Psoas muscle (tissue), 8 donors: ENCODE measurements at regions of chr7 and their contacts with region 1.

Region 1: DNA sequence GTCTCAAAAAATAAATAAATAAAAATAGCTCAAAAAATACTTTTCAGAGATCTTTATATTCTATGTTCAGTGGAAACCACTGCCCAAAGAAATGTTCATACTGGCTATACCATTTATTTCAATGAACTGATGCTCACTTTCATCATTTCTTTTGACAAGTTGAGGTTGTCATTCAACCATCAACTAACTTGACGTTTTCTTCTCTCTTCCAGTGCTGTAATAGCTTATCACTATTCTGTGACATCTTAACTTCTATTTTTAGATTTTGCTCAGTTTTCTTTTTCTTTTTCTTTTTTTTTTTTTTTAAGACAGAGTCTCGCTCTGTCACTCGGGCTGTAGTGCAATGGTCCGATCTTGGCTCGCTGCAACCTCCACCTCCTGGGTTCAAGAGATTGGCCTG is 8.7 kb upstream of the CTAGE4 start:
- DNase-seq: no peak
- ATAC-seq: no peak
- H3K4me3 ChIP-seq: no peak overlapping the region
- H3K27ac ChIP-seq: no peak overlapping the region
- H3K4me1 ChIP-seq: no peaks in the 10 kb centered on the region
- H3K27me3 ChIP-seq: no peaks in the 10 kb centered on the region
- CTCF ChIP-seq: no peak

Region 2: GRCh38 chr7:144391823-144392255 is 217.2 kb after region 1 on chr7:
- intact Hi-C with region 1: loop called in 1 of 2 experiments (anchors 5 kb)
- DNase-seq: no peak
- ATAC-seq: peak; percentile 44 to 78 (median 52)
- H3K4me3 ChIP-seq: peak overlapping the region; percentile 16
- H3K27ac ChIP-seq: no peak overlapping the region
- H3K4me1 ChIP-seq: peaks cover 2% of the 10 kb centered on the region
- H3K27me3 ChIP-seq: no peaks in the 10 kb centered on the region
- CTCF ChIP-seq: peak; percentile 62